Posterior vena cava (tissue), 2 donors: ENCODE measurements at regions of chr7 and their contacts with region 1.

Region 1: DNA sequence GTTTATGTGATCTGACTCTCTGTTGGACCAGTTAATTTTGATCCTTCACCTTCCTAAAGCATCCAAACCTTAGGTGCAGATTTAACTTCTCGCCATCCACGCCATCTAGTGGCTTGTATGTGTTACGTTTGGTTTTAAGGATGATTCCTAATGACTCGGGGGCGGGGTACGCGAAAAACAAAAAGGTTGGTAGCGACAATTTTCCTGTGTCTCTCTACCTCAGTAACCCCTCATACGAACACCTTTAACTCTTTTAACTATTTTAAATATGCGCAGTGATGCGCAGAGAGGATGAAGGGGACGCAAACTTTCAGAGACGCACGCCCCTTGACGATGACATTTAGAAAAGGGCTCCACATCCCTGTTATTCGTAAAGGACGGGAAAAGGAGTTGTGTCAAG is 714 bp upstream of the KCND2 start:
- DNase-seq: peak; percentile 44

Region 2: GRCh38 chr7:119931230-119931824 is 340.9 kb before region 1 on chr7:
- intact Hi-C with region 1: loop called in 1 of 2 experiments (anchors 5 kb)
- DNase-seq: no peak

Region 3: DNA sequence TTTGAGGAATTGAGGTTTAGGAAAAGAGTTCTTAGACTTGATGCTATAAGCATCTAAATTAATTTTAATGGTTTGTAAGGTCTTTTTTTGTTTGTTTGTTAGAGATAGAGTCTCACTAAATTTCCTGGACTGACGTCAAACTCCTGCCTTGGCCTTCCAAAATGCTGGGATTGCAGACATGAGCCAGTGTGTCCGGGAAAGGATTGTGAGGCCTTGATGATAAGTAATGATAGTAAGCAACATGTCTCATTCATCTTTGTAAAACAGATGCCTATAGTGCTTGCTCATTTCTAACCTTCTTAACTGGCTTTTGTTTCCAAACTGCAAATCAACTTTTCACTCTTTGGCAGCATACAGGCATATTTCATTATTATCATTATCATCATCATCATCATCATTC is 175.2 kb before region 1 on chr7:
- intact Hi-C with region 1: no loop called
- DNase-seq: peak; percentile 81

Region 4: DNA sequence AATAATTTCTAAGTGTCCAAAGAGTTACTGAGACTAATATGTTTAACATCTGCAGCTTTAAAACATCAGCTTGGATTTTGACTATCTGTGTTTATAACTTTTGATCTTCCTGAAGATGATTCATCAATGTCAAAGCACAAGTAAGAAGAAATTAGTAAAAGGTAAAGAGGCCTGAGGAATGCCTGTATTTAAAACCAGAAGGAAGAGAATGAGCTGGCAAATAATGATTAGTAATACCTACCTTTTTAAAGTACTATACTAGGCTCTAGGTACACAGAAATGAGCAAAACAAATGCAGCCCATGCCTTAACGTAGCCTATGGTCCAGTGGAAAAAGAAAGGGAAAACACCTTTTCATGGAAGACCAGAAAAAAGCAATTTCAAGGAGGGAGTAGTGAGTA is 158.8 kb after region 1 on chr7:
- intact Hi-C with region 1: loop called in 1 of 2 experiments (anchors 5 kb)
- DNase-seq: no peak